ENCODE measurements at regions of chr5 and their contacts with region 1.

Region 1: GRCh38 chr5:170267431-170268152 is 30.0 kb downstream of the LCP2 start:
- DNase-seq: peak; percentile 71 to 95
- ATAC-seq: peak; percentile 69 to 78 (median 76)
- H3K4me3 ChIP-seq: no peak overlapping the region
- H3K4me3 Mint-ChIP-seq: peak overlapping the region; percentile 79
- H3K27ac ChIP-seq: peak overlapping the region; percentile 61
- H3K27ac Mint-ChIP-seq: peak overlapping the region; percentile 94 to 99
- H3K4me1 ChIP-seq: peaks cover 51% of the 10 kb centered on the region
- H3K4me1 Mint-ChIP-seq: peaks cover 60 to 65% of the 10 kb centered on the region in 2 donors
- H3K27me3 ChIP-seq: no peaks in the 10 kb centered on the region
- H3K27me3 Mint-ChIP-seq: no peaks in the 10 kb centered on the region
- CTCF ChIP-seq: peak; percentile 77

Region 2: DNA sequence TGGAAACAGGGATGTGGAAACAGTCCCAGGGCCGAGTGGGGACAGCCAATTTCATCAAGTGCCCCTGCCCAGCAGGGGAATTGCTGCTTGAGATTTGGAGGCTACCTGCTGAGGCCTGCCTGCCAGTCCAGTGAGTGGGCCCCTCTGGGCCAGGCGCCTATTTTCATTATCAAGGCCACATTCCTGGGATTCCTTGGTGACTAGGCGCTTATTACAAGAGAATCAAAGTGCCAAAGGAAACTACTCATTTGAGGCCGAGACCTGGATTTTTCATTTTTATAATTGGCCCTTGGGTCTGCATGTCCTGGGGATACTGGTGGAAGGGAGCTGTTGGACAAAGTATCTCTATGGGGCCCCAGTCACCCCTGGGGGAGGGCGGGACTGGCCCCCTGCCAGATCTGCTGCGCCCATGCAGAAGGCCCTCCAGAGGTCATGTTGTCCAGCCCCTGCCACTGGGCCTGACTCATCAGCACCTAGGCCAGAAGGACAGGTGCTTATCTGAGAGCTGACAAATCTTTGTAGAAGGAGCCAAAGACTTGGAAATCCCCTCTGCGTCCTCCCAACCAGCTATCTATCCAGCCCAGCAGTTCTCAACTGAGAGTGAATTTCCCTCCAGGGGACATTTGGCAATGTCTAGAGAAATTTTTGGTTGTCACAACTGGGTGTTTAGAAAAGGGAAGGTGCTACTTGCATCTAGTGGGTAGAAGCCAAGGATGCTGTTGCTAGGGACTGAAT is 116.3 kb before region 1 on chr5:
- intact Hi-C with region 1: no loop called
- DNase-seq: no peak
- ATAC-seq: no peak
- H3K4me3 ChIP-seq: no peak overlapping the region
- H3K4me3 Mint-ChIP-seq: no peak overlapping the region
- H3K27ac ChIP-seq: no peak overlapping the region
- H3K27ac Mint-ChIP-seq: no peak overlapping the region
- H3K4me1 ChIP-seq: no peaks in the 10 kb centered on the region
- H3K4me1 Mint-ChIP-seq: no peaks in the 10 kb centered on the region
- H3K27me3 ChIP-seq: no peaks in the 10 kb centered on the region
- H3K27me3 Mint-ChIP-seq: peaks cover 6 to 8% of the 10 kb centered on the region in 2 donors
- CTCF ChIP-seq: no peak

Region 3: GRCh38 chr5:170338933-170339779 is 71.6 kb after region 1 on chr5:
- intact Hi-C with region 1: loop called (anchors 1 kb)
- DNase-seq: peak; percentile 49 to 89
- ATAC-seq: peak; percentile 80 to 94 (median 84)
- H3K4me3 ChIP-seq: no peak overlapping the region
- H3K4me3 Mint-ChIP-seq: no peak overlapping the region
- H3K27ac ChIP-seq: no peak overlapping the region
- H3K27ac Mint-ChIP-seq: peak overlapping the region in 1 of 2 donors; percentile 29
- H3K4me1 ChIP-seq: peaks cover 39% of the 10 kb centered on the region
- H3K4me1 Mint-ChIP-seq: peaks cover 10 to 21% of the 10 kb centered on the region in 2 donors
- H3K27me3 ChIP-seq: no peaks in the 10 kb centered on the region
- H3K27me3 Mint-ChIP-seq: no peaks in the 10 kb centered on the region
- CTCF ChIP-seq: peak; percentile 86

Region 4: GRCh38 chr5:170420780-170421412 is 153.3 kb after region 1 on chr5:
- intact Hi-C with region 1: loop called (anchors 1 kb)
- DNase-seq: peak; percentile 35 to 82
- ATAC-seq: peak; percentile 42 to 73 (median 68)
- H3K4me3 ChIP-seq: no peak overlapping the region
- H3K4me3 Mint-ChIP-seq: no peak overlapping the region
- H3K27ac ChIP-seq: no peak overlapping the region
- H3K27ac Mint-ChIP-seq: no peak overlapping the region
- H3K4me1 ChIP-seq: peaks cover 4% of the 10 kb centered on the region
- H3K4me1 Mint-ChIP-seq: peaks cover 0 to 5% of the 10 kb centered on the region in 2 donors
- H3K27me3 ChIP-seq: no peaks in the 10 kb centered on the region
- H3K27me3 Mint-ChIP-seq: peaks cover 14 to 16% of the 10 kb centered on the region in 2 donors
- CTCF ChIP-seq: peak; percentile 74